Gastrocnemius medialis (tissue), 4 donors: ENCODE measurements at regions of chr4 and their contacts with region 1.

Region 1: GRCh38 chr4:185209031-185209851 is at the start of gene SNX25:
- DNase-seq: peak; percentile 69 to 80
- ATAC-seq: peak; percentile 86 to 89
- H3K4me3 ChIP-seq: peak within 1 kb of the TSS; percentile 56 to 80 (median 68)
- H3K27ac ChIP-seq: peak within 1 kb of the TSS; percentile 75 to 90 (median 82)
- H3K4me1 ChIP-seq: peaks cover 20 to 25% of the 10 kb centered on the region in 2 donors
- H3K27me3 ChIP-seq: no peaks in the 10 kb centered on the region
- CTCF ChIP-seq: peak in 4 of 5 experiments; percentile 13 to 54 (median 34)
- POLR2A ChIP-seq: peak; percentile 94 to 97
- total RNA-seq, gene SNX25: 11.3 to 17.3 (median 13.4) TPM

Region 2: GRCh38 chr4:185256446-185256845 is 47.2 kb after region 1 on chr4:
- in situ Hi-C with region 1: no loop called
- intact Hi-C with region 1: loop called (anchors 5 kb)
- DNase-seq: no peak
- ATAC-seq: no peak
- H3K4me3 ChIP-seq: no peak overlapping the region
- H3K27ac ChIP-seq: no peak overlapping the region
- H3K4me1 ChIP-seq: peaks cover 7 to 18% of the 10 kb centered on the region in 2 donors
- H3K27me3 ChIP-seq: no peaks in the 10 kb centered on the region
- CTCF ChIP-seq: no peak
- POLR2A ChIP-seq: no peak

Region 3: DNA sequence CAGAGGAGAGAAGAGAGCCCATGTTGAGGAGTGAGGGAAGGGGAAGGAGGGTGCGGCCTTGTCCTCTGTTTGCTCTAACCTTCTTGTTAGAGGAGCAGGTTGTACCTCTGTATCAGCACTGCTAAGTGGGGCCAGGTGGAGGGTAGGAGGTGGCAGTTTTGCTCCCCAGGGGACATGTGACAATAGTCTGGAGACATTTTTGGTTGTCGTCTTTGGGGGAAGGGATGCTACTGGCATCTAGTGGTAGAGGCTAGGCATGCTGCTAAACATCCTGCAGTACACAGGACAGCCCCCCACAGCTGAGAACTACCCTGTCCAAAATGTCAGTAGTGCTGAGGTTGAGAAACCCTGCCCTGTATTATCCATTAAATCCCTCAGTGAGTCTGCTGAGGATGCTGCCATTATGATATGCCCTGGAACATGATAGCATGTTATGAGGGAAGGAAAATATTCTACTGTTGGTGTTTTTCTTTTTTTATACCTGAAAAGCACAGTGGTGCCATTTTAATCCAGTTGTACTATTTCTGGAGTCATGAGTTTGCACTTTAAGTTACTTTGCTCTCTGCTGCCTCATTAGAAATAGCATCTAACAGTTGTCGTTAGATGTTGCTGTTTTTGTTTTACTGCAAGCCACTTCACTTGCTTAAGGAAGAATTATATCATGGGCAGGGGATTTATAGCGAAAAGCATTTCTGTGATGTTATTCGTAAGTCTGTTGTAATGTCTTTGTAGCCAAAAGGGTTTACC is 95.9 kb after region 1 on chr4:
- in situ Hi-C with region 1: no loop called
- intact Hi-C with region 1: loop called (anchors 10 kb)
- DNase-seq: no peak
- ATAC-seq: no peak
- H3K4me3 ChIP-seq: no peak overlapping the region
- H3K27ac ChIP-seq: no peak overlapping the region
- H3K4me1 ChIP-seq: no peaks in the 10 kb centered on the region
- H3K27me3 ChIP-seq: no peaks in the 10 kb centered on the region
- CTCF ChIP-seq: peak in 2 of 5 experiments; percentile 22 to 34
- POLR2A ChIP-seq: no peak